A673 (cell line): ENCODE measurements at regions of chr15 and their contacts with region 1.

Region 1: GRCh38 chr15:74133694-74134386 is 3.5 kb downstream of the ISLR2 start:
- DNase-seq: no peak
- H3K4me3 ChIP-seq: no peak overlapping the region
- H3K27ac ChIP-seq: no peak overlapping the region
- H3K4me1 ChIP-seq: peaks cover 36% of the 10 kb centered on the region
- H3K27me3 ChIP-seq: peaks cover 45% of the 10 kb centered on the region
- CTCF ChIP-seq: no peak

Region 2: DNA sequence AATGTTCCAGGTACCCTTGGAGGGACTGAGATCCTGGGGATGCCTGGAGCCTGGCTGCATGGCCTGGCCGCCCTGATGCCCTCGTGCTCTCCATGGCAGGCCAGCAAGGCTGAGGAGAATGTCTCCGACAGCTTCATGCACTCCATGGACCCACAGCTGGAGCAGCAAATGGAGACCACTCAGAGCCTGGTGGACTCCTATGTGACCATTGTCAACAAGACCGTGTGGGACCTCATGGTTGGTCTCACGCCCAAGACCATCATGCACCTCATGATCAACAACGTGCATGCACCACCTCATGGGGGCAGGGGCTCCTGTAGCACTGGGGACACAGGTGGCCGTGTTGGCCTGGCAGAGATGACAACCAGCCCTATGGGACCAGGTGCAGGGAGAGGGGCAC is 71.2 kb before region 1 on chr15:
- CTCF ChIA-PET with region 1: no interaction called
- POLR2A ChIA-PET with region 1: no interaction called
- intact Hi-C with region 1: no loop called
- DNase-seq: no peak
- H3K4me3 ChIP-seq: no peak overlapping the region
- H3K27ac ChIP-seq: no peak overlapping the region
- H3K4me1 ChIP-seq: no peaks in the 10 kb centered on the region
- H3K27me3 ChIP-seq: no peaks in the 10 kb centered on the region
- CTCF ChIP-seq: no peak

Region 3: GRCh38 chr15:74156678-74157411 is 23.0 kb after region 1 on chr15:
- CTCF ChIA-PET with region 1: interaction called, 3 read pairs
- POLR2A ChIA-PET with region 1: interaction called, 15 read pairs
- intact Hi-C with region 1: no loop called
- DNase-seq: no peak
- H3K4me3 ChIP-seq: no peak overlapping the region
- H3K27ac ChIP-seq: no peak overlapping the region
- H3K4me1 ChIP-seq: no peaks in the 10 kb centered on the region
- H3K27me3 ChIP-seq: no peaks in the 10 kb centered on the region
- CTCF ChIP-seq: no peak

Region 4: DNA sequence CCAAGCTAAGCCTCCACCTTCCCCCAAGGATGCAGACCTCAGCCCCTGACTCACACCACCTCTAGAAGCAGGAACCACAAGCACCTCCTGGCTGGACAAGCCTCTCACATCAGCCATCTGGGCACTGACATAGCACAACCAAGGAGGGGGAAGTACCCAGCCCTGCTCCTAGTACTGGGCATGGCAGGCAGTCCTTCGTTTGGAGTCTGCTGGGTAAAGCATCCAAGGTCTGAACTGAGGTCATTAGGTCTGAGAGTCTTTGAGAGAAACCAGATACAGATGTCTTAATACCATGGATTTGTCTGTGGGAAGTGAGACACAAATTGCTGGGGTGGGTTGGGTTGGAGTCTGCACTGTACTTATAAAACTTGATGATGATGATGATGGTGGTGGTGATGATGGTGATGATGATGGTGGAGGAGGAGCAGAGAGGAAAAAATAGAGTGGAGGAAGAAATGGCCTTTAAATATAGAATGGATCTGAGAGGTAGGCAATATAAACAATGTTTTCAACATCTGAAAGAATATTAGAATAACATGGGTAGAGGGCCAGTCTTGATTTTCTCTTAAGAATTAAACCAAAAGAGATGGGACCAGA is 164.1 kb after region 1 on chr15:
- CTCF ChIA-PET with region 1: interaction called, 11 read pairs
- POLR2A ChIA-PET with region 1: no interaction called
- intact Hi-C with region 1: no loop called
- DNase-seq: no peak
- H3K4me3 ChIP-seq: no peak overlapping the region
- H3K27ac ChIP-seq: no peak overlapping the region
- H3K4me1 ChIP-seq: peaks cover 4% of the 10 kb centered on the region
- H3K27me3 ChIP-seq: no peaks in the 10 kb centered on the region
- CTCF ChIP-seq: no peak